WTC11 (cell line): ENCODE measurements at regions of chr6 and their contacts with region 1.

Region 1: GRCh38 chr6:161370880-161371279 is 97.0 kb upstream of the AGPAT4 start:
- DNase-seq: peak; percentile 78
- ATAC-seq: peak; percentile 73
- H3K4me3 Mint-ChIP-seq: no peak overlapping the region
- H3K27ac Mint-ChIP-seq: 0 out of 2 replicates have a peak overlapping the region, but pooled peaks have one; percentile 29
- H3K4me1 Mint-ChIP-seq: peaks cover 4% of the 10 kb centered on the region
- H3K27me3 Mint-ChIP-seq: no peaks in the 10 kb centered on the region
- CTCF ChIP-seq: peak; percentile 92

Region 2: DNA sequence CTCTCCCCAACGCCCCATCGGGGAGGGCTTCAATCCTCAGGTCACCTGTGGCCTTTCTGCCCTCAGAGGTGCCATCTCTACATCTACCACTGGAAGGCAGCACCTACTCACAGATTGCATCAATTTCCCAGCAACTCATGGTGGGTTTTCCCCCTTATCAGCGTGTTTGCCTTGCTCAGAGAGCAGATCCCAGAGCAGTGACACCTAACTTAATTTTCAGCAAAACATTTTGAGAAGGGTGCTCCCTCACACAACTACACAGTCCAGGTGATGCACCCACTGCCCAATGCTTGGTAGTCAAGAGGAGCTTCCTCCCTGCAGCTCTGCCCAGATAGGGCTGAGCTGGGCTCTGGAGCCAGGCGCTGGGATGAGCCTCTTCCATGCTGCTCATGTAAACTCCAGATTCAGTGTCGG is 620.6 kb before region 1 on chr6:
- CTCF ChIA-PET with region 1: interaction called, 16 read pairs
- POLR2A ChIA-PET with region 1: no interaction called
- DNase-seq: peak; percentile 74
- ATAC-seq: peak; percentile 95
- H3K4me3 Mint-ChIP-seq: peak overlapping the region; percentile 43; the same call in 1 of the 2 replicates
- H3K27ac Mint-ChIP-seq: no peak overlapping the region
- H3K4me1 Mint-ChIP-seq: peaks cover 13% of the 10 kb centered on the region
- H3K27me3 Mint-ChIP-seq: peaks cover 9% of the 10 kb centered on the region
- CTCF ChIP-seq: peak; percentile 66

Region 3: DNA sequence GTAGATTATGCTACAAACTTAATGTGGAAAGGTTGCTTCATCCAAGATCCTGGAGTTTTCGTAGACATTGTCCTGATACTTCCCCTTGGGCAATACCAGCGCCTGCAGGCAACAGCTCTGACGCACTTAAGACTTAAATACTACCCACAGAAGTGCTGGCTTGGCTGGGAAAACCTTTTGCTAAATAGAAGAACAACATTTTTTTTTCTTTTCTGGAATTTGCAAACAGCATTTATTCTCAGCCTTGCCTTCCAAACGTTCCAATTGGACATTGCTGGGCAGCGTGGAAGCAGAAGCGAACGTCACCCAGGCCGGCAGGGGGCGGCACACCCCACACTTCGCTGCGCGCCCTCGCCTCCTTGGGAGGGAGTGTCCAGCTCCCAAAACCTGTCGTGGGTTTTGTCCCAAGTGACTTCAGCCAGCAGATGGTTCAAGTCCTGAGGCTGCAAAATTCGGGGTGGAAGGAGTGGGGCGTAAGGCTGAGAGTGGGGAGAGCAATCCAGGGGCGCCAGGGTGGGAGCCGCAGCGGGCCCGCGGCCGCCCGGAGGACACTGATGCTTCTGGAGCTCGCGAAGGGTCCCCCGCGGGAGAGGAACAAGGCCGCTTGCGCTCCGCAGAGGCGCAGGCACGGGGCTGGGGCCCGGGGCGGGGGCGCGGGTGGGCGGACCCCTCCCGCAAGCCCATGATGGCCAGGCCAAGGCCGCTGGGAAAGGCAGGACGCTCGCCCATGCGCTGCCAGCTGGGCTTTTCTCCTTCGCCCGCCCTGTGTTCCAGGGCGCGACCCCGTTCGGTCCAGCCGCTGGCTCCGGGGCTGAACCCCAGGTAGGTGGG is 440.1 kb before region 1 on chr6:
- CTCF ChIA-PET with region 1: interaction called, 12 read pairs
- POLR2A ChIA-PET with region 1: no interaction called
- DNase-seq: peak; percentile 77
- ATAC-seq: peak; percentile 76
- H3K4me3 Mint-ChIP-seq: peak overlapping the region; percentile 77
- H3K27ac Mint-ChIP-seq: no peak overlapping the region
- H3K4me1 Mint-ChIP-seq: peaks cover 16% of the 10 kb centered on the region
- H3K27me3 Mint-ChIP-seq: peaks cover 11% of the 10 kb centered on the region
- CTCF ChIP-seq: peak; percentile 92

Region 4: GRCh38 chr6:161139766-161140553 is 230.9 kb before region 1 on chr6:
- CTCF ChIA-PET with region 1: interaction called, 20 read pairs
- POLR2A ChIA-PET with region 1: no interaction called
- DNase-seq: no peak
- ATAC-seq: peak; percentile 68
- H3K4me3 Mint-ChIP-seq: no peak overlapping the region
- H3K27ac Mint-ChIP-seq: no peak overlapping the region
- H3K4me1 Mint-ChIP-seq: peaks cover 14% of the 10 kb centered on the region
- H3K27me3 Mint-ChIP-seq: no peaks in the 10 kb centered on the region
- CTCF ChIP-seq: no peak

Region 5: GRCh38 chr6:161161889-161162624 is 208.8 kb before region 1 on chr6:
- CTCF ChIA-PET with region 1: interaction called, 10 read pairs
- POLR2A ChIA-PET with region 1: no interaction called
- DNase-seq: no peak
- ATAC-seq: no peak
- H3K4me3 Mint-ChIP-seq: no peak overlapping the region
- H3K27ac Mint-ChIP-seq: no peak overlapping the region
- H3K4me1 Mint-ChIP-seq: peaks cover 29% of the 10 kb centered on the region
- H3K27me3 Mint-ChIP-seq: no peaks in the 10 kb centered on the region
- CTCF ChIP-seq: no peak

Region 6: DNA sequence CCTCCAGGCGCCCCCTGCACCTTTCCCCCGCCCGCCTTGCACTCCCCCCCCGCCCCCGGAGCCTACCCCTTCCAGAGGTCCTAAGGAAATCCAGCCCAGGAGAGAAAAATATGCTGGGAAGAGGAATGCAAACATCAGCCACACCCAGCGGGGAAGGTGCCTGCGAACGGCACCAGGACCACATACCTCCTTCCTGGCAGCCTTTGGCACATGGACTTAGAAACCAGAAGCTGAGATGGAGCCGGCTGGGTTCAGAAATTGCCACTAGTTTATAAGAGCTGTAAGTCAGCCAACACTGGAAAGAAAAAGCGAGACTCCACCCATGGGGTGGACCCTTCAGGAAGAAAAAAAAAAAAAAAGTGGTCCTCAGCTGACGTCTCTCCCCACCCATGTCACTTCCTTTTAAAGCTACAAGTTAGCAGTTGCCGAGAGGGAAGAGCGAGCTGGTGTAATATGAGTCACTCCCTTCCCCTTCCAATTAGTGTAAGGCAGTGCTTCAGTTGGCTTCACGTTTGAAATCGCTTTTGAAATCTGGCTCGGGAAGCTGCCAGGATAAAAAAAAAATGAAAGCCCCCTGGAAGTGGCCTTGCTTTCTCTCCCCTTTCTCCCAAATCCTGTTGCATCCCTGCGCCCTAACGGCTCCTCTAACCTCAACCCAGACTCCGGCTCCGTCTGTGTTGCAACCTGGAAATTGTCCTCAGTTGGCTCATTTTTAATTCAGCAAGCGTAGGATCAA is 97.0 kb before region 1 on chr6 and contains the start of gene AGPAT4:
- CTCF ChIA-PET with region 1: interaction called, 11 read pairs
- POLR2A ChIA-PET with region 1: interaction called, 3 read pairs
- DNase-seq: peak; percentile 67
- ATAC-seq: peak; percentile 93
- H3K4me3 Mint-ChIP-seq: peak within 1 kb of the TSS; percentile 96
- H3K27ac Mint-ChIP-seq: peak within 1 kb of the TSS; percentile 99
- H3K4me1 Mint-ChIP-seq: peaks cover 38% of the 10 kb centered on the region
- H3K27me3 Mint-ChIP-seq: 0 out of 2 replicates have a peak, but pooled peaks cover 4% of the 10 kb centered on the region
- CTCF ChIP-seq: no peak
- total RNA-seq, gene AGPAT4: 19.7 to 27.4 TPM (median 25.3 TPM) in 3 replicates

Region 7: GRCh38 chr6:161359618-161359945 is 11.3 kb before region 1 on chr6:
- CTCF ChIA-PET with region 1: interaction called, 69 read pairs
- POLR2A ChIA-PET with region 1: interaction called, 5 read pairs
- DNase-seq: no peak
- ATAC-seq: no peak
- H3K4me3 Mint-ChIP-seq: no peak overlapping the region
- H3K27ac Mint-ChIP-seq: no peak overlapping the region
- H3K4me1 Mint-ChIP-seq: peaks cover 9% of the 10 kb centered on the region
- H3K27me3 Mint-ChIP-seq: no peaks in the 10 kb centered on the region
- CTCF ChIP-seq: no peak